GM12878 (cell line): ENCODE measurements at regions of chr12 and their contacts with region 1.

Region 1: DNA sequence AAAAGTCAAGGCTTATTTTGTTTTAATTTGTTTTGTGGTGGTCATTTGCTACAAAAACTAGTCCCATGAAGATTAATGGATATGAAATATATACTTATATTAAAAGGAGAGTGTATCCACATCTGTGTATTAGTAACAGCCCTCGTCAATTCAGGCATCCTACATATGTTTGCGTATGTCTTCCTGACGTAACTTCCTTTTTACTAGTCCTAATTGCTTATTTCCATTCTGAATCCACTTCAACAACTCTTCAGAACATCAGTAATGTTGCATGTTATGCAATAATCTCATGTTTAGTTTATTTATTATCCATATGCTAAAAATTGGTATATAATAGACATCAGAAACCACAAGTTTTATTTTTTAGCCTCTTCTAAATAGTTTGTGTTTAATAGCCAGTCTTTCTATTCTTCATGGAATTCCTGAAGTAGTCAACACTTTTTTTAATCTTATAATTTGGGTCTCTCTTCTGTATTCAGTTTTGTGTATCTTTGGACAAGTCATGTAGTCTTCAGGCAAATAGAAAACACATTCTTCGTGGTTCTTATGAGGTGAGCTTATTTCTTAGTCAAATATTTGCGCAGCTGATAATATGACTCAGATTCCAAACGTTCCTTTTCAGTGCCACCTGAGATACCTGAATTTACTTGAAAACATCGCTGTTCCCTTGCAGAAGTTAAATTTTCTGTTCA is 268.7 kb downstream of the CCDC59 start:
- DNase-seq: no peak
- ATAC-seq: no peak
- H3K4me3 ChIP-seq: no peak overlapping the region
- H3K27ac ChIP-seq: no peak overlapping the region
- H3K4me1 ChIP-seq: no peaks in the 10 kb centered on the region
- H3K27me3 ChIP-seq: no peaks in the 10 kb centered on the region
- CTCF ChIP-seq: no peak
- EP300 ChIP-seq: no peak
- POLR2A ChIP-seq: no peak
- RAD21 ChIP-seq: no peak

Region 2: GRCh38 chr12:81863406-81863805 is 226.1 kb before region 1 on chr12:
- CTCF ChIA-PET with region 1: no interaction called
- POLR2A ChIA-PET with region 1: no interaction called
- RAD21 ChIA-PET with region 1: no interaction called
- SMC1A ChIA-PET with region 1: no interaction called
- in situ Hi-C with region 1: no loop called
- intact Hi-C with region 1: no loop called
- DNase-seq: no peak
- ATAC-seq: no peak
- H3K4me3 ChIP-seq: no peak overlapping the region
- H3K27ac ChIP-seq: no peak overlapping the region
- H3K4me1 ChIP-seq: no peaks in the 10 kb centered on the region
- H3K27me3 ChIP-seq: no peaks in the 10 kb centered on the region
- CTCF ChIP-seq: no peak
- EP300 ChIP-seq: no peak
- POLR2A ChIP-seq: no peak
- RAD21 ChIP-seq: no peak

Region 3: DNA sequence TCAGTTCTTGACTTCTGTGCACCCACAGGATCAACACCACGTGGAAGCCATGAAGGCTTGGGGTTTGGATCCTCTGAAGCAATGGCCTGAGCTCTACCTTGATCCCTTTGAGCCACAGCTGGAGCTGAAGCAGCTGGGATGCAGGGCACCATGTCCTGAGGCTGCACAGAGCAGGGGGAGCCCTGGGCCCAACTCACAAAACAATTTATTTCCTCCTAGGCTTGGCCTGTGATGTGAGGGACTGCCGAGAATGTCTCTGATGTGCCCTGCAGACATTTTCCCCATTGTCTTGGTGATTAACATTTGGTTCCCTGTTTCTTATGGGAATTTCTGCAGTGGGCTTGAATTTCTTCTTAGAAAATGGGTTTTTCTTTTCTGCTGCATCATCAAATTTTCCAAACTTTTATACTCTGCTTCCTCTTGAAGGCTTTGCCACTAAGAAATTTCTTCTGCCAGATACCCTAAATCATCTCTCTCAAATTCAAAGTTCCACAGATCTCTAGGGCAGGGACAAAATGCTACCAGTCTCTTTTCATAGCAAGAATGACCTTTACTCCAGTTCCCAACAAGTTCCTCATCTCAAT is 19.5 kb before region 1 on chr12:
- CTCF ChIA-PET with region 1: no interaction called
- POLR2A ChIA-PET with region 1: no interaction called
- RAD21 ChIA-PET with region 1: interaction called, 3 read pairs
- SMC1A ChIA-PET with region 1: interaction called, 16 read pairs
- in situ Hi-C with region 1: no loop called
- intact Hi-C with region 1: no loop called
- DNase-seq: no peak
- ATAC-seq: no peak
- H3K4me3 ChIP-seq: no peak overlapping the region
- H3K27ac ChIP-seq: no peak overlapping the region
- H3K4me1 ChIP-seq: no peaks in the 10 kb centered on the region
- H3K27me3 ChIP-seq: no peaks in the 10 kb centered on the region
- CTCF ChIP-seq: no peak
- EP300 ChIP-seq: no peak
- POLR2A ChIP-seq: no peak
- RAD21 ChIP-seq: no peak

Region 4: GRCh38 chr12:82290415-82290814 is 200.9 kb after region 1 on chr12:
- CTCF ChIA-PET with region 1: no interaction called
- POLR2A ChIA-PET with region 1: no interaction called
- RAD21 ChIA-PET with region 1: no interaction called
- SMC1A ChIA-PET with region 1: no interaction called
- in situ Hi-C with region 1: no loop called
- intact Hi-C with region 1: no loop called
- DNase-seq: no peak
- ATAC-seq: no peak
- H3K4me3 ChIP-seq: no peak overlapping the region
- H3K27ac ChIP-seq: no peak overlapping the region
- H3K4me1 ChIP-seq: no peaks in the 10 kb centered on the region
- H3K27me3 ChIP-seq: no peaks in the 10 kb centered on the region
- CTCF ChIP-seq: no peak
- EP300 ChIP-seq: no peak
- POLR2A ChIP-seq: no peak
- RAD21 ChIP-seq: no peak